ENCODE measurements at regions of chr6 and their contacts with region 1.

Region 1: DNA sequence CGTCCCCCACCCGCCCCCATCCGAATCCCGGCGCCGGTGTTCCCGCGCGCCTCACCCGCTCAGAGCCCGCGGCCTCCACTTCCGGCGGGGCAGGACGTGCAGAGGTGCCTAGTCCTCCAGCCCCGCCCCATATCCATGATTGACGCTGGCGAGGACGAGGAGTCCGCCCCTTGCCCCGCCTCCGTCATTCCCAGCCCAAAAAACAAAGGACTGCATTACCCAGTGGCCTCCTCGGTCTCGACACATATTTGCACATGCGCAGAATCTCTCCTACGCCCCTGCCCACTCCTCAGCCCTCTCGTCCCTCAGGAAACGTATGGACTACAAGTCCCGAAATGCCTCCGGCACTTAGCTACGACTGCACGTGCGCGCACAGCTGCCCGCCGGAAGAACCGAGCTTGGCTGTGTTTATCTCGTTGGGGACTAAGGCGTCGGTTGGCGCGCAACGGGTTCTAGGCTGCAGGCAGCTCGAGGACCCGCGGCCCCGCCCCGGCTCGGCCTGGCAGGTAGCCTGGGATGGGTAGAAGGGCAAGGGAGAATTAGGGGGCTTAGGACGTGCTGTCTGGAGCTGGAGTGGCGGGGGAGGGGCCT is at the starts of genes KLHDC3 and MEA1:
- DNase-seq: peak; percentile 100
- H3K4me3 Mint-ChIP-seq: peak within 1 kb of the TSS; percentile 95
- H3K27ac Mint-ChIP-seq: peak within 1 kb of the TSS; percentile 88
- H3K4me1 Mint-ChIP-seq: peaks cover 53% of the 10 kb centered on the region
- H3K27me3 Mint-ChIP-seq: no peaks in the 10 kb centered on the region
- total RNA-seq, gene KLHDC3: 58.6 to 58.9 TPM
- total RNA-seq, gene MEA1: 80.6 to 85.1 TPM

Region 2: GRCh38 chr6:42978839-42979522 is 35.0 kb before region 1 on chr6 and contains the start of gene PEX6:
- CTCF ChIA-PET with region 1: interaction called, 3 read pairs
- intact Hi-C with region 1: loop called (anchors 1 kb)
- DNase-seq: peak; percentile 97
- H3K4me3 Mint-ChIP-seq: peak within 1 kb of the TSS; percentile 95
- H3K27ac Mint-ChIP-seq: peak within 1 kb of the TSS; percentile 99
- H3K4me1 Mint-ChIP-seq: peaks cover 53% of the 10 kb centered on the region
- H3K27me3 Mint-ChIP-seq: no peaks in the 10 kb centered on the region
- total RNA-seq, gene PEX6: 17.1 to 18.2 TPM

Region 3: DNA sequence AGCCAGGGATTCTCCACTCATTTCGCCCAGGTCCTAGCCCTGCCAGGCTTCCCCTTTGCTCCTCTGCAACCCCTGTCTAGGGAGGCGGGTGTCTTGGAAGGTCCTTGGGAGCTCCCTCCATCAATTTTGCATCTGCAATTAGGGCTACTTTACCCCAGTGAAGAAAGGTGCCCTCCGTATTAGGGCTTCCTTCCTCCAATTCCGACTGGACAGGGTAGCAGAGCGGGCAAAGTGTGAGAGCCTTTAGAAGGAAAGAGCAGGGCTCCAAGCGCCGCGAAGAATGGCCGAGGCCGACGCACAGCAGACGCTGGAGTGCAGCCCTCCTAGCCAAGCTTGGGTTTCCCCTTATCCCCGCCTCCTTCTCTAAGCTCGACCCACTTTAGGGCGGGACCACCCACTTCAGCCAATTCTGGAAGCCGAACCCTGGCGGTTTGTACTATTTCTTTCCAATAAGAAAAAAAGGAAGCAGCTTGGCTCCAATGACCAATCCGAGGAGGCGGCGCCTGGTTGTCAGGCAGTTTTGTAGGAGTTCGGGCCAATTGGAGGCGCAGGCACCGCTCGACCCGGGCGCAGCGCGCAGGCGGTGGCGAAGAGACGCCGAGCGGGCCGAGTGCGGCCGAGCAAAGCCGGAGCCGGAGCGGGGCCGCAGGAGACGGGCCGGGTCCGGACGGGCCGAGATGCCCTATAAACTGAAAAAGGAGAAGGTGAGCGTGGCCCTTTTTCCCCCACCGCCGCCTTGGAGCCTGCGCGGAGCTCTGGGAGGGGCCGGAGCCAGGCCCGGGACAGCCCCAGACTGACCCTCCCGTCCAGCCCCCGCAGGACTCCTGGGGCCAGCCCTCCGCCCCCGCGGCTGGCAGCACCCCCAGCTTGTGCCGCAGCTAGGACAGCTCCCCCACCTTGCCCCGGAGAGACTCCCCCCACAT is 29.7 kb before region 1 on chr6 and contains the start of gene PPP2R5D:
- CTCF ChIA-PET with region 1: interaction called, 3 read pairs
- intact Hi-C with region 1: loop called (anchors 1 kb)
- DNase-seq: peak; percentile 99
- H3K4me3 Mint-ChIP-seq: peak within 1 kb of the TSS; percentile 93
- H3K27ac Mint-ChIP-seq: peak within 1 kb of the TSS; percentile 81
- H3K4me1 Mint-ChIP-seq: peaks cover 51% of the 10 kb centered on the region
- H3K27me3 Mint-ChIP-seq: no peaks in the 10 kb centered on the region
- total RNA-seq, gene PPP2R5D: 52.4 to 54.4 TPM

Region 4: GRCh38 chr6:43053545-43054205 is 39.7 kb after region 1 on chr6 and contains the start of gene CUL7:
- CTCF ChIA-PET with region 1: interaction called, 3 read pairs
- intact Hi-C with region 1: loop called (anchors 1 kb)
- DNase-seq: peak; percentile 96
- H3K4me3 Mint-ChIP-seq: peak within 1 kb of the TSS; percentile 99
- H3K27ac Mint-ChIP-seq: peak within 1 kb of the TSS; percentile 90
- H3K4me1 Mint-ChIP-seq: peaks cover 39% of the 10 kb centered on the region
- H3K27me3 Mint-ChIP-seq: no peaks in the 10 kb centered on the region
- total RNA-seq, gene CUL7: 21.9 to 22.1 TPM

Measured in activated naive CD4-positive, alpha-beta T cell treated with anti-CD3 and anti-CD28 coated beads for 36 hours (primary cell).